ENCODE measurements at regions of chr10 and their contacts with region 1.

Region 1: DNA sequence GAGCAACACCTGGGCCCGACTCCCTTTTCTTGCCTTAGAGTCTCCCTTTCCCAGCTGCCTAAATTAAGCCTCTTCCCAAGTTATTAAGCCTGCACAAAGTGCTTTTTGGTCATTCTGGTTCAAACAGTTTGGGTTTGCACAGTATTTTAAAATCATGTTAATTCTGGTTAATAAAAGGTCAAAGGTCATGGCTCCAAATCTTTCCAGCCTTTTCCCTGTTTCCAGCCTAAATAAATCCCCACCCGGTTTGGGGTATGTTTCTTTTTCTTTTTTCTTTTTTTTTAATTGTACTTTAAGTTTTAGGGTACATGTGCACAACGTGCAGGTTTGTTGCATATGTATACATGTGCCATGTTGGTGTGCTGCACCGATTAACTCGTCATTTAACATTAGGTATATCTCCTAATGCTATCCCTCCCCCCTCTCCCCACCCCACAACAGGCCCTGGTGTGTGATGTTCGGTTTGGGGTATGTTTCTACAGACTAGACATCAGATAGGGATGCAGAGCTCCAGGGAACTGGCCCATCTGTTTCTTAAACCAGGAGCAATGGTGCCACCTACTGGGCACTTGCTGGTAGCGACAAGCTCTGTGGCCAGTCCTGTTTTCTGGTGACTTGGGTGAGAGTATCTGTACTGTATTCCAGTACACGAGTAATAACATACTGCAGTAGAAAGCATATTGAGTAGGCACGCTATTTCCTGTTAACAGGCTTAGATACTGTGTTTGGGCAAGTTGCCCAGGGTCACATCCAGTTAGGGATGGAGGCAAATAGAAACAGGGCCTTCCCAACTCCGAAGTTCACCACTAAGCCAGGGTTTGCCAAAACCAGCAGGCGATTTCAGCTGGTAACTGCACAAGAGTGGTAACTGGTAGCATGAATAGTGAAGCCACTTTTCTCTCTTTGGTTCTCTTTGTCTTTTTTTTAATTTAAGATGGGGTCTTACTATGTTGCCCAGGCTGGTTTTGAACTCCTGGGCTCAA is 60.6 kb upstream of the TRIM8 start:
- DNase-seq: peak; percentile 91
- ATAC-seq: peak; percentile 100
- H3K4me3 Mint-ChIP-seq: no peak overlapping the region
- H3K27ac Mint-ChIP-seq: no peak overlapping the region
- H3K4me1 Mint-ChIP-seq: peaks cover 9% of the 10 kb centered on the region
- H3K27me3 Mint-ChIP-seq: no peaks in the 10 kb centered on the region

Region 2: GRCh38 chr10:102167861-102168260 is 415.9 kb before region 1 on chr10:
- CTCF ChIA-PET with region 1: interaction called, 8 read pairs
- POLR2A ChIA-PET with region 1: no interaction called
- intact Hi-C with region 1: loop called in 1 of 2 experiments (anchors 10 kb)
- DNase-seq: no peak
- ATAC-seq: no peak
- H3K4me3 Mint-ChIP-seq: no peak overlapping the region
- H3K27ac Mint-ChIP-seq: no peak overlapping the region
- H3K4me1 Mint-ChIP-seq: peaks cover 4% of the 10 kb centered on the region
- H3K27me3 Mint-ChIP-seq: no peaks in the 10 kb centered on the region

Region 3: DNA sequence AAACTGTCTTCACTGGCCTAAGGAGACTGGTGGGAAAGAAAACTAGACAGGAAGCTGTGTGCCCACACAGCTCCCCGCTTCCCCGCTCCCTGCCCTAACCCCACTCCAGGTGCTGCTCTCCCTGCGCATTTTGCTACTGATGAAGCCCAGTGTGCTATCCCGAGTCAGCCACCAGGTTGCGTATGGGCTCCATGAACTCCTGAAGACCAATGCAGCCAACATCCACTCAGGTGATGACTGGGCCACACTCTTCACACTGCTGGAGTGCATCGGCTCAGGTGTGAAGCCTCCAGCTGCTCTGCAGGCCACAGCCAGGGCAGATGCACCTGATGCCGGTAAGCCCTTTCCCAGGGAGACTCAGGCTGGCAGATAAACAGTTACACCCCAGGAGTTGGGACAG is 208.5 kb before region 1 on chr10:
- CTCF ChIA-PET with region 1: interaction called, 3 read pairs
- POLR2A ChIA-PET with region 1: no interaction called
- intact Hi-C with region 1: loop called in 1 of 2 experiments (anchors 5 kb)
- DNase-seq: peak; percentile 28
- ATAC-seq: peak; percentile 49
- H3K4me3 Mint-ChIP-seq: no peak overlapping the region
- H3K27ac Mint-ChIP-seq: no peak overlapping the region
- H3K4me1 Mint-ChIP-seq: no peaks in the 10 kb centered on the region
- H3K27me3 Mint-ChIP-seq: no peaks in the 10 kb centered on the region

Region 4: DNA sequence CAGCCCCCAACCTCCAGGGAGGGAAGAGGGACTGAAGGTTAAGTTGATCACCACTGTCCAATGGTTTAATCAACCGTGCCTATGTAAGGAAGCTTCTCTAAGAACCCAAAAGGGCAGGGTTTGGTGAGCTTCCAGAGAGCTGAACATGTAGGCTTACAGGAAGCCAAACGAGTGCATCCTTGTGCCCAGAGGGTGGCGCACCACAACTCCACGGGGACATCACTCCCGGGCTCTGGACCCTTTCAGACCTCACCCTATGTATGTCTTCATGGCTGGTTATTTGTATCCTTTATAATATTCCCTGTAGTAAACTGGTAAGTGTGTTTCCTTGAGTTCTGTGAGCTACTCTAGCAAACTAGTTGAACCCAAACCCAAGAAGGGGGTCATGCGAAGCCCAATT is 199.7 kb before region 1 on chr10:
- CTCF ChIA-PET with region 1: interaction called, 15 read pairs
- POLR2A ChIA-PET with region 1: no interaction called
- intact Hi-C with region 1: loop called in 1 of 2 experiments (anchors 5 kb)
- DNase-seq: peak; percentile 51
- ATAC-seq: peak; percentile 64
- H3K4me3 Mint-ChIP-seq: no peak overlapping the region
- H3K27ac Mint-ChIP-seq: no peak overlapping the region
- H3K4me1 Mint-ChIP-seq: peaks cover 2% of the 10 kb centered on the region
- H3K27me3 Mint-ChIP-seq: no peaks in the 10 kb centered on the region

Region 5: GRCh38 chr10:102399217-102400089 is 184.3 kb before region 1 on chr10:
- CTCF ChIA-PET with region 1: interaction called, 4 read pairs
- POLR2A ChIA-PET with region 1: no interaction called
- intact Hi-C with region 1: loop called (anchors 2 to 5 kb)
- DNase-seq: peak; percentile 94
- ATAC-seq: peak; percentile 60
- H3K4me3 Mint-ChIP-seq: peak overlapping the region; percentile 95
- H3K27ac Mint-ChIP-seq: peak overlapping the region; percentile 98
- H3K4me1 Mint-ChIP-seq: peaks cover 41% of the 10 kb centered on the region
- H3K27me3 Mint-ChIP-seq: no peaks in the 10 kb centered on the region

Region 6: DNA sequence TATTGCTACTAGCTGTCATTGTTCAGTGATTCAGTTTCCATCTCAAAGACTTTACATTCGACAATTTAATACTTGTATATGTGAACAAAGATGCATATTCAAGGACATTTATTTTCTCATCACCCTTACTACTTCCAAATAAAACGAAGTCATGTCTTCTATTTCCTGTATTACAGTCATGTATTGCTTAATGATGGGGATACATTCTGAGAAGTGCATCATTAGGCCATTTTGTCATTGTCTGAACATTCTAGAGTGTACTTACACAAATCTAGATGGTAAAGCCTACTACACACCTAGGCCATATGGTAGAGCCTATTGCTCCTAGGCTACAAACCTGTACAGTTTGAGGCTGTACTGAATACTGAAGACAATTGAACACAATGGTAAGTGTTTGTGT is 138.9 kb before region 1 on chr10:
- CTCF ChIA-PET with region 1: no interaction called
- POLR2A ChIA-PET with region 1: no interaction called
- intact Hi-C with region 1: no loop called
- DNase-seq: no peak
- ATAC-seq: no peak
- H3K4me3 Mint-ChIP-seq: no peak overlapping the region
- H3K27ac Mint-ChIP-seq: no peak overlapping the region
- H3K4me1 Mint-ChIP-seq: peaks cover 8% of the 10 kb centered on the region
- H3K27me3 Mint-ChIP-seq: no peaks in the 10 kb centered on the region

Region 7: DNA sequence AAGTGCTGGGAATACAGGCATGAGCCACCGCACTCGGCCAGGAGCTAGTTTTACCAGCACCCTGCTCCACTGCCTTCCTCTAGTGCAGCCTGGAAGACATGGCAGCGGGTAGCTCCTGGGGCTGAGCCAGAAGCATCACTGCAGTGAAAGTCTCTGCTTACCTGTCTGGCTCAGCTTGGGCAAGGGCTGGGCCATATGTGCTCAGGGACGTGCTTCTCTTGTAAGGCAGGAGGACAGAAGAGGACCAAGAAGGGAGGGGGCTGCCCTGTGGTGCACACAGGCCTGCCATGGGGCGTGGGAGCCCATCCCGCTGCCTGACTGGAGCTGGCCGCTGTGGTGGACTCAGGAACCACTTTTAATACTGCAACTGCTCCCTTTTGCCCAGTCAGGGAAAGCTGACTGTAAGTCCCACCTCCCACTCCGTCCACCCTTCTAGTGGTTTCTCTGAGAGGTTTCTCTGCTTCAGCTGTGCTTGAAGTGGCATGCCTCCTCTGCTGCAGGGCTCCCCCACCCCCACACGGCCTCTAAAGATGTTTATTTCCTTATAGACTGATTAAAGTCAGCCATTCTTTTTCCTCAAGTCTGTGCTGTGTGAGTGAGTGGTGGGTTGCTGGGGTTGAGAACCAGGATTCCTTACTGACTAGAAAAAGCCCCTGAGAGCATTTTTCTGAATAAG is 107.1 kb before region 1 on chr10:
- CTCF ChIA-PET with region 1: interaction called, 19 read pairs
- POLR2A ChIA-PET with region 1: no interaction called
- intact Hi-C with region 1: no loop called
- DNase-seq: peak; percentile 36
- ATAC-seq: no peak
- H3K4me3 Mint-ChIP-seq: no peak overlapping the region
- H3K27ac Mint-ChIP-seq: peak overlapping the region; percentile 78
- H3K4me1 Mint-ChIP-seq: peaks cover 28% of the 10 kb centered on the region
- H3K27me3 Mint-ChIP-seq: no peaks in the 10 kb centered on the region

Region 8: DNA sequence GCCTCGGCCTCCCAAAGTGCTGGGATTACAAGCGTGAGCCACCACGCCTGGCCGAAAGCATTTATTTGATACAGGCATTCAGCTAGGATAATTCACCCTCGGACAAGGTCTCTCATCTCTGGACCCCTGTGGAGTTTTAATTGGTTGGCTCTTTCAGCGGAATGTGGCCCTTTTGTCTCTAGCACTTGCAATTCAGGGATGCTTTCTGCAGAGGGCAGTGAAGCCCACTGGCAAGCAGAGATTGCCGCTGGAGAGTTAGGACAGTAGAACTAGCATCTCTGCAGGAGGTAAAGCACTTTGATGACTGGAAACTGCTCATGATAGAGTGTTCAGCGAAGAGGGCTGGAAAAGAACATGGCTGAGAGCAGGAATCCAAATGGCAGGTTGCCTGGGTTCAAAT is 17.9 kb before region 1 on chr10:
- CTCF ChIA-PET with region 1: interaction called, 7 read pairs
- POLR2A ChIA-PET with region 1: no interaction called
- intact Hi-C with region 1: loop called in 1 of 2 experiments (anchors 2 kb)
- DNase-seq: no peak
- ATAC-seq: no peak
- H3K4me3 Mint-ChIP-seq: no peak overlapping the region
- H3K27ac Mint-ChIP-seq: no peak overlapping the region
- H3K4me1 Mint-ChIP-seq: peaks cover 2% of the 10 kb centered on the region
- H3K27me3 Mint-ChIP-seq: no peaks in the 10 kb centered on the region

Measured in activated CD4-positive, alpha-beta T cell treated with anti-CD3 and anti-CD28 coated beads for 36 hours (primary cell).